ENCODE measurements at regions of chr14 and their contacts with region 1.

Region 1: DNA sequence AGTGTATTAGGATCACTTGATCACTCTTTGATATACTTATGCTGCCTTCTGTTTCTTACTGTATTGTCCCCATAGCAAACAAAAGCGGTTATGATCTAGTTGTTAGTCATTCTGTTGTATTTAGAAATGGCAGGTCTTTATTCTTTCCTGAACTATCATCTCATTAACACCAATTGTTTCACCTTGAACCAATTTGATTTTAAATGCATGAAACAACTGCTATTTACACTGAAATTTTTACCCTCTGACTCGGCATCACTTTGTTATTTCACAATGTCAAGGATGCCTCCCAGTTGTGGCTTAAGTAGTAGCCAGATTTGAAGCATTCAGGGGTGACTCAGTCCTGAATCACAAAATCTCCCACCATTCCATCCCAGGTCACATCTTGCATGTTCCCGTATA is 303.5 kb downstream of the EGLN3 start:
- DNase-seq: peak; percentile 96
- ATAC-seq: peak; percentile 82
- H3K4me3 ChIP-seq: no peak overlapping the region; the same call in 1 of the 2 replicates
- H3K27ac ChIP-seq: peak overlapping the region; percentile 83
- H3K4me1 ChIP-seq: peaks cover 41% of the 10 kb centered on the region
- H3K27me3 ChIP-seq: no peaks in the 10 kb centered on the region
- CTCF ChIP-seq: no peak

Region 2: GRCh38 chr14:33564774-33565630 is 82.4 kb before region 1 on chr14:
- CTCF ChIA-PET with region 1: no interaction called
- POLR2A ChIA-PET with region 1: no interaction called
- intact Hi-C with region 1: loop called (anchors 5 kb)
- DNase-seq: peak; percentile 82
- ATAC-seq: peak; percentile 87
- H3K4me3 ChIP-seq: no peak overlapping the region
- H3K27ac ChIP-seq: no peak overlapping the region
- H3K4me1 ChIP-seq: peaks cover 45% of the 10 kb centered on the region
- H3K27me3 ChIP-seq: no peaks in the 10 kb centered on the region
- CTCF ChIP-seq: no peak

Region 3: GRCh38 chr14:33668066-33668465 is 20.7 kb after region 1 on chr14:
- CTCF ChIA-PET with region 1: no interaction called
- POLR2A ChIA-PET with region 1: no interaction called
- intact Hi-C with region 1: loop called (anchors 1 kb)
- DNase-seq: peak; percentile 69
- ATAC-seq: peak; percentile 94
- H3K4me3 ChIP-seq: no peak overlapping the region
- H3K27ac ChIP-seq: 0 out of 2 replicates have a peak overlapping the region, but pooled peaks have one; percentile 13
- H3K4me1 ChIP-seq: peaks cover 25% of the 10 kb centered on the region; the same call in 1 of the 2 replicates
- H3K27me3 ChIP-seq: no peaks in the 10 kb centered on the region
- CTCF ChIP-seq: no peak

Measured in PC-3 (cell line).